CD4-positive, alpha-beta memory T cell (primary cell): ENCODE measurements at regions of chr3 and their contacts with region 1.

Region 1: GRCh38 chr3:56915966-56916586 is 114.3 kb upstream of the ARHGEF3 start:
- DNase-seq: peak; percentile 71 to 89 (median 78)
- H3K4me3 ChIP-seq: peak overlapping the region; percentile 90 to 92
- H3K4me3 Mint-ChIP-seq: peak overlapping the region; percentile 91 to 96 (median 94)
- H3K27ac ChIP-seq: peak overlapping the region; percentile 78
- H3K27ac Mint-ChIP-seq: peak overlapping the region; percentile 92 to 98 (median 94)
- H3K4me1 ChIP-seq: peaks cover 77% of the 10 kb centered on the region
- H3K4me1 Mint-ChIP-seq: peaks cover 64 to 92% (median 72%) of the 10 kb centered on the region in 4 donors
- H3K27me3 ChIP-seq: no peaks in the 10 kb centered on the region
- H3K27me3 Mint-ChIP-seq: no peaks in the 10 kb centered on the region

Region 2: GRCh38 chr3:56702490-56703315 is 213.4 kb before region 1 on chr3:
- CTCF ChIA-PET with region 1: interaction called, 5 read pairs
- POLR2A ChIA-PET with region 1: interaction called, 5 read pairs
- intact Hi-C with region 1: loop called (anchors 2 kb)
- DNase-seq: peak; percentile 57 to 70 (median 66)
- H3K4me3 ChIP-seq: no peak overlapping the region
- H3K4me3 Mint-ChIP-seq: no peak overlapping the region
- H3K27ac ChIP-seq: no peak overlapping the region
- H3K27ac Mint-ChIP-seq: peak overlapping the region in 3 of 7 donors; percentile 15 to 42 (median 32)
- H3K4me1 ChIP-seq: peaks cover 16% of the 10 kb centered on the region
- H3K4me1 Mint-ChIP-seq: peaks cover 11 to 21% (median 13%) of the 10 kb centered on the region in 4 donors
- H3K27me3 ChIP-seq: no peaks in the 10 kb centered on the region
- H3K27me3 Mint-ChIP-seq: no peaks in the 10 kb centered on the region

Region 3: GRCh38 chr3:56819016-56819809 is 96.9 kb before region 1 on chr3:
- CTCF ChIA-PET with region 1: interaction called, 16 read pairs
- POLR2A ChIA-PET with region 1: interaction called, 27 read pairs
- intact Hi-C with region 1: no loop called
- DNase-seq: no peak
- H3K4me3 ChIP-seq: no peak overlapping the region
- H3K4me3 Mint-ChIP-seq: no peak overlapping the region
- H3K27ac ChIP-seq: no peak overlapping the region
- H3K27ac Mint-ChIP-seq: peak overlapping the region in 6 of 7 donors; percentile 6 to 90 (median 83)
- H3K4me1 ChIP-seq: peaks cover 60% of the 10 kb centered on the region
- H3K4me1 Mint-ChIP-seq: peaks cover 60 to 90% (median 68%) of the 10 kb centered on the region in 4 donors
- H3K27me3 ChIP-seq: no peaks in the 10 kb centered on the region
- H3K27me3 Mint-ChIP-seq: no peaks in the 10 kb centered on the region

Region 4: GRCh38 chr3:56887402-56888025 is 28.6 kb before region 1 on chr3:
- CTCF ChIA-PET with region 1: interaction called, 7 read pairs
- POLR2A ChIA-PET with region 1: interaction called, 82 read pairs
- intact Hi-C with region 1: loop called (anchors 1 kb)
- DNase-seq: peak; percentile 26 to 46 (median 37)
- H3K4me3 ChIP-seq: peak overlapping the region in 1 of 2 donors; percentile 9
- H3K4me3 Mint-ChIP-seq: peak overlapping the region; percentile 70 to 81 (median 74)
- H3K27ac ChIP-seq: no peak overlapping the region
- H3K27ac Mint-ChIP-seq: peak overlapping the region; percentile 30 to 95 (median 81)
- H3K4me1 ChIP-seq: peaks cover 88% of the 10 kb centered on the region
- H3K4me1 Mint-ChIP-seq: peaks cover 68 to 95% (median 81%) of the 10 kb centered on the region in 4 donors
- H3K27me3 ChIP-seq: no peaks in the 10 kb centered on the region
- H3K27me3 Mint-ChIP-seq: no peaks in the 10 kb centered on the region

Region 5: DNA sequence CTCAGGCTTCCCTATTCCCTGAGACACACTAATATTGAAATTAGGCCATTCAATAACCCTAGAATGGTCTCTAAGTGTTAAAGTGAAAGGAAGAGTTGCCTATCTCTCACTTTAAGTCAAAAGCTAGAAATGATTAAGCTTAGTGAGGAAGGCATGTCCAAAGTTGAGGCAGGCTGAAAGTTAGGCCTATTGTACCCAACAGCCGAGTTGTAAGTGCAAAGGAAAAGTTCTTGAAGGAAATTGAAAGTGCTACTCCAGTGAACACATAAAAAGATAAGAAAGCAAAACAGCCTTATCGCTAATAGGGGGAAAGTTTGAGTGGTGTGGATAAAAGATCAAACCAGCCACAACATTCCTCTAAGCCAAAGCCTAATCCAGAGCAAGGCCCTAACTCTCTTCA is 26.4 kb after region 1 on chr3:
- CTCF ChIA-PET with region 1: interaction called, 3 read pairs
- POLR2A ChIA-PET with region 1: interaction called, 29 read pairs
- intact Hi-C with region 1: no loop called
- DNase-seq: no peak
- H3K4me3 ChIP-seq: no peak overlapping the region
- H3K4me3 Mint-ChIP-seq: peak overlapping the region; percentile 2 to 82 (median 68)
- H3K27ac ChIP-seq: no peak overlapping the region
- H3K27ac Mint-ChIP-seq: peak overlapping the region; percentile 33 to 93 (median 72)
- H3K4me1 ChIP-seq: peaks cover 24% of the 10 kb centered on the region
- H3K4me1 Mint-ChIP-seq: peaks cover 17 to 35% (median 23%) of the 10 kb centered on the region in 4 donors
- H3K27me3 ChIP-seq: no peaks in the 10 kb centered on the region
- H3K27me3 Mint-ChIP-seq: no peaks in the 10 kb centered on the region

Region 6: GRCh38 chr3:57227204-57227929 is 311.3 kb after region 1 on chr3 and contains the start of gene APPL1:
- CTCF ChIA-PET with region 1: no interaction called
- POLR2A ChIA-PET with region 1: no interaction called
- intact Hi-C with region 1: no loop called
- DNase-seq: peak; percentile 79 to 89 (median 84)
- H3K4me3 ChIP-seq: peak within 1 kb of the TSS; percentile 40 to 85
- H3K4me3 Mint-ChIP-seq: peak within 1 kb of the TSS; percentile 89 to 98 (median 94)
- H3K27ac ChIP-seq: peak within 1 kb of the TSS; percentile 45
- H3K27ac Mint-ChIP-seq: peak within 1 kb of the TSS; percentile 70 to 93 (median 86)
- H3K4me1 ChIP-seq: peaks cover 26% of the 10 kb centered on the region
- H3K4me1 Mint-ChIP-seq: peaks cover 12 to 35% (median 25%) of the 10 kb centered on the region in 4 donors
- H3K27me3 ChIP-seq: no peaks in the 10 kb centered on the region
- H3K27me3 Mint-ChIP-seq: no peaks in the 10 kb centered on the region
- total RNA-seq, gene APPL1: 30.9 to 33.6 TPM